PC-3 (cell line): ENCODE measurements at regions of chr7 and their contacts with region 1.

Region 1: GRCh38 chr7:156168434-156168833 is 356.2 kb upstream of the SHH start:
- DNase-seq: no peak
- ATAC-seq: no peak
- H3K4me3 ChIP-seq: no peak overlapping the region
- H3K27ac ChIP-seq: no peak overlapping the region
- H3K4me1 ChIP-seq: no peaks in the 10 kb centered on the region
- H3K27me3 ChIP-seq: peaks cover 19% of the 10 kb centered on the region; the same call in 1 of the 2 replicates
- CTCF ChIP-seq: no peak

Region 2: GRCh38 chr7:155568842-155569494 is 599.5 kb before region 1 on chr7:
- CTCF ChIA-PET with region 1: no interaction called
- POLR2A ChIA-PET with region 1: interaction called, 13 read pairs
- intact Hi-C with region 1: no loop called
- DNase-seq: no peak
- ATAC-seq: no peak
- H3K4me3 ChIP-seq: no peak overlapping the region
- H3K27ac ChIP-seq: no peak overlapping the region
- H3K4me1 ChIP-seq: no peaks in the 10 kb centered on the region
- H3K27me3 ChIP-seq: peaks cover 47% of the 10 kb centered on the region
- CTCF ChIP-seq: no peak

Region 3: DNA sequence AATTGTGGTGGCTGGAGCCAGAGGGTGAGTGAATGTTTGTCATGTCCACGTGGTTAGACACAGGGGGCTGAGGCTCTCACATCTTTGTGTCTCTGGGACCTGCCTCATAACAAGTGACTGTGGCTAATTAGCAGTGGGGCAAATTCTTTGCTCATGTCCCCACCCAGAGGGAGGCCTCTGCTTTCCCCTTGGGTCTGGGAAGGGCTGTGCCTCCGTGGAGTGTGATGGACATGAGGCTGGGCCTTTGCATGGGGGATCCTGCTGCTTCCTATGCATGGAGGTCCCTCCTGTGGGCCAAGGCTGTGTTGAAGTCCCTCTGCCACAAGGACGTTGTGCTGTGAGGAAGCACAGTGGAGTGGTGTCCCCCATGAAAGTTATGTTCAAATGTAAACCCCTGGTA is 28.8 kb before region 1 on chr7:
- CTCF ChIA-PET with region 1: no interaction called
- POLR2A ChIA-PET with region 1: no interaction called
- intact Hi-C with region 1: no loop called
- DNase-seq: no peak
- ATAC-seq: no peak
- H3K4me3 ChIP-seq: no peak overlapping the region
- H3K27ac ChIP-seq: no peak overlapping the region
- H3K4me1 ChIP-seq: no peaks in the 10 kb centered on the region
- H3K27me3 ChIP-seq: peaks cover 55% of the 10 kb centered on the region
- CTCF ChIP-seq: no peak

Region 4: GRCh38 chr7:156192921-156193320 is 24.5 kb after region 1 on chr7:
- CTCF ChIA-PET with region 1: no interaction called
- POLR2A ChIA-PET with region 1: no interaction called
- intact Hi-C with region 1: no loop called
- DNase-seq: peak; percentile 58
- ATAC-seq: peak; percentile 93
- H3K4me3 ChIP-seq: no peak overlapping the region
- H3K27ac ChIP-seq: no peak overlapping the region
- H3K4me1 ChIP-seq: no peaks in the 10 kb centered on the region
- H3K27me3 ChIP-seq: peaks cover 27% of the 10 kb centered on the region; the same call in 1 of the 2 replicates
- CTCF ChIP-seq: no peak